CD4-positive, alpha-beta T cell (primary cell): ENCODE measurements at regions of chr9 and their contacts with region 1.

Region 1: DNA sequence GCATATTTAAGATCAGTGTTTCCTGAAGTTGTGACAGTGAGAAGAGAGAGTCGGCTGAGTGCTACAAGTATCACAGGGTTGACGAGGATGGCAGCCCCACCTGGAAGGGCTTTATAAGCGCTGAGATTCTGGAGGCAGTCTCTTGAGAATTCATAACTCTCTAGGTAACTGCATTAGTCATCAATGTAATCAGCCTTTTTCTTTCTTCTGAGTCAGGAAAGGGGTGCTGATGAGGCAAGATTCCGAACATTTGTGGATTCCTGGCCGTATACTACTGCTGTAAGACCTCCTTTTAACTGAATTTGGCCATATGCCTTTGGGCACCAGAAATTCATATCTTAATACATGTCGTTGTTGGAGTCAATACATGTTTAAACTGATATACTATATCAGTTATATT is 6.6 kb upstream of the RNF20 start:
- DNase-seq: no peak
- ATAC-seq: no peak
- H3K4me3 ChIP-seq: no peak overlapping the region
- H3K4me3 Mint-ChIP-seq: no peak overlapping the region
- H3K27ac ChIP-seq: no peak overlapping the region
- H3K27ac Mint-ChIP-seq: no peak overlapping the region
- H3K4me1 ChIP-seq: no peaks in the 10 kb centered on the region
- H3K4me1 Mint-ChIP-seq: no peaks in the 10 kb centered on the region
- H3K27me3 ChIP-seq: peaks cover 8 to 9% of the 10 kb centered on the region in 2 experiments
- H3K27me3 Mint-ChIP-seq: peaks cover 49% of the 10 kb centered on the region
- CTCF ChIP-seq: no peak

Region 2: DNA sequence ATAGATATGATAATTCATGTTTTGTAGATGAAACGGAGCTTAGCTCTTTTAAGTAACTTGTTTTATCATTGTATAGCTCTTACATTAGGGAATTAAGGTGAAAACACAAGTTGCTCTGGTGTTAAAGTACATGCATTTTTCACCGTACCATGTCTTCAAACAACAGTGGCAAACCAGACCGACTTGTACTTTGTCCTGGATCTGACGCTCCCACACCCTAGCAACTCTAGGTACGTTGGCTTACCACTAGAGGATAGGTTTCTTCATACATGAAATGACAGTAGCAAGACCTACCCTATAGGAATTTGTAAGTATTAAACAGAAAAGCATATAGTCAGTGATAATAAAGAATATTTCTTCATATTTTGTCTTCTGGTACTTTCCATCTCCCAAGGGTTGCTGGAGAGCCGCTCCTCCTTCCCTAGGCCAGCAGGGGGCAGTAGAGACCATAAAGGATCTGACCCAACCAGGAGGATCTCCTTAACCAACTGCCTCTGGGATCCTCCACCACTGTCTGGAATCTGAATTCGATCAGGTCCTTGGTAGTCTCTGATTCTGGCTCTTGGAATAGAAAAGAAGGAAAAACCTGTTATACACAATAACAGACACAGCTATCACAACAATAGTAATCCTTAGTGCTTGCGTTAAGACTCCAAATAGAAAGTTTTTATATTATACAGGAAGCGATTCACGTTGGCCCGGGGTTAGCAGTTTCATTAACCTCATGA is 812.5 kb before region 1 on chr9:
- CTCF ChIA-PET with region 1: no interaction called
- POLR2A ChIA-PET with region 1: no interaction called
- intact Hi-C with region 1: loop called in 1 of 2 experiments (anchors 10 kb)
- DNase-seq: peak in 7 of 14 experiments; percentile 3 to 40 (median 21)
- ATAC-seq: no peak
- H3K4me3 ChIP-seq: no peak overlapping the region
- H3K4me3 Mint-ChIP-seq: no peak overlapping the region
- H3K27ac ChIP-seq: no peak overlapping the region
- H3K27ac Mint-ChIP-seq: no peak overlapping the region
- H3K4me1 ChIP-seq: no peaks in the 10 kb centered on the region
- H3K4me1 Mint-ChIP-seq: no peaks in the 10 kb centered on the region
- H3K27me3 ChIP-seq: no peaks in the 10 kb centered on the region
- H3K27me3 Mint-ChIP-seq: peaks cover 11% of the 10 kb centered on the region
- CTCF ChIP-seq: peak; percentile 28